ENCODE measurements at regions of chr22 and their contacts with region 1.

Region 1: DNA sequence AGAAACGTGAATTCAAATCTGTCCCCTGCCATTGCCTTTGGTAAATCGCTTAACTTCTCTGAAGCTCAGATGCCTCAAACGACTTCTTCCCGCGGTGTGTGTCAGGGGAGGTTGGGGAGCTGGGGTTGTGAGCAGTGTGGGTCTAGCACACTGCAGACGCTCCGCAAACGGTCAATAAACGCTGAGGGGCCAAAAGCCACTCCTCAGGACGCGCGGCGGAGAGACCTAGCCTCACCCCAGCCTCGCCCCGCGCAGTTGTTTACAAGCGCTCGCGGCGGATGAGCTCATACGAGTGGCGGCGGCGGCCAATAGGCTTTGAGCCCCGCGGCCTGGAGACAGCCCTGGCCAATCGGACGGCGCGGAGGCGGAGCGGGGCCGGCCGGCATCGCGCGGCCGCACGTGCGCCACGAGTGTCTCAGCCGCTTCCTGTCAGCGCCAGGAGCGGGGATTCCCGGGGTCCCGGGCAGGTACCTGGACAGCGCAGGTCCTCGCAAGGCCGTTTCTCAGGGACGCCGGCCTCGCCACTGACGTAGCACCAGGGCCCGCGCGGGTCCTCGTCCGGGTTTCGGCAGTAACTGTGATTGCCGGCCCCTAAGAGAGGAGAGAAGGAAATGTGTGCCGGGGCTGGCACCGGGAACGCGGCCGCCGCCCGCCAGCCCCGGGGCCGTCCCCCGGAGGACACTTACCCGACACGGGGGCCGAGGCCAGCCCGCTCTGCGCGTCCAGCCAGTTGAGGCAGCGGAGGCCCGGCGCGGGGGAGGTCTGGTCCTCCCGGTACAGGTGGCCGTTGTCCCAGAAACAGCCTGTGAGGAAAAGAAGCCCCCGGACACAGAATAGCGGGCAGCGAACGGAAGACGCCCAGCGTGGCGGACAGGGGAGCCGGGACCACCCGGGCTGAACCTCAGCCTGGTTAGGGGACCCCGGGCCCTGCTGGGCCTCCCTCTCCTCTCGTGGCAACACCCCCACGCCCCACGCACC is 1.5 kb downstream of the PIK3IP1 start:
- DNase-seq: peak; percentile 95
- ATAC-seq: peak; percentile 85
- H3K4me3 Mint-ChIP-seq: peak overlapping the region; percentile 93
- H3K27ac Mint-ChIP-seq: peak overlapping the region; percentile 98
- H3K4me1 Mint-ChIP-seq: peaks cover 58% of the 10 kb centered on the region
- H3K27me3 Mint-ChIP-seq: no peaks in the 10 kb centered on the region

Region 2: GRCh38 chr22:31211862-31212730 is 78.7 kb before region 1 on chr22 and contains the start of gene LIMK2:
- POLR2A ChIA-PET with region 1: interaction called, 25 read pairs
- DNase-seq: peak; percentile 100
- ATAC-seq: peak; percentile 97
- H3K4me3 Mint-ChIP-seq: peak within 1 kb of the TSS; percentile 87
- H3K27ac Mint-ChIP-seq: peak within 1 kb of the TSS; percentile 90
- H3K4me1 Mint-ChIP-seq: peaks cover 29% of the 10 kb centered on the region
- H3K27me3 Mint-ChIP-seq: no peaks in the 10 kb centered on the region
- total RNA-seq, gene LIMK2: 38.9 to 39.9 TPM

Region 3: GRCh38 chr22:31241936-31242335 is 48.8 kb before region 1 on chr22:
- POLR2A ChIA-PET with region 1: no interaction called
- DNase-seq: no peak
- ATAC-seq: no peak
- H3K4me3 Mint-ChIP-seq: no peak overlapping the region
- H3K27ac Mint-ChIP-seq: no peak overlapping the region
- H3K4me1 Mint-ChIP-seq: peaks cover 18% of the 10 kb centered on the region
- H3K27me3 Mint-ChIP-seq: no peaks in the 10 kb centered on the region

Region 4: GRCh38 chr22:31278622-31279326 is 12.0 kb before region 1 on chr22:
- POLR2A ChIA-PET with region 1: interaction called, 127 read pairs
- DNase-seq: no peak
- ATAC-seq: peak; percentile 87
- H3K4me3 Mint-ChIP-seq: peak overlapping the region; percentile 52
- H3K27ac Mint-ChIP-seq: peak overlapping the region; percentile 95
- H3K4me1 Mint-ChIP-seq: peaks cover 29% of the 10 kb centered on the region
- H3K27me3 Mint-ChIP-seq: no peaks in the 10 kb centered on the region

Region 5: GRCh38 chr22:31308181-31308580 is 17.4 kb after region 1 on chr22:
- POLR2A ChIA-PET with region 1: interaction called, 22 read pairs
- DNase-seq: no peak
- ATAC-seq: peak; percentile 40
- H3K4me3 Mint-ChIP-seq: peak overlapping the region; percentile 34
- H3K27ac Mint-ChIP-seq: peak overlapping the region; percentile 67
- H3K4me1 Mint-ChIP-seq: peaks cover 20% of the 10 kb centered on the region
- H3K27me3 Mint-ChIP-seq: no peaks in the 10 kb centered on the region

Region 6: DNA sequence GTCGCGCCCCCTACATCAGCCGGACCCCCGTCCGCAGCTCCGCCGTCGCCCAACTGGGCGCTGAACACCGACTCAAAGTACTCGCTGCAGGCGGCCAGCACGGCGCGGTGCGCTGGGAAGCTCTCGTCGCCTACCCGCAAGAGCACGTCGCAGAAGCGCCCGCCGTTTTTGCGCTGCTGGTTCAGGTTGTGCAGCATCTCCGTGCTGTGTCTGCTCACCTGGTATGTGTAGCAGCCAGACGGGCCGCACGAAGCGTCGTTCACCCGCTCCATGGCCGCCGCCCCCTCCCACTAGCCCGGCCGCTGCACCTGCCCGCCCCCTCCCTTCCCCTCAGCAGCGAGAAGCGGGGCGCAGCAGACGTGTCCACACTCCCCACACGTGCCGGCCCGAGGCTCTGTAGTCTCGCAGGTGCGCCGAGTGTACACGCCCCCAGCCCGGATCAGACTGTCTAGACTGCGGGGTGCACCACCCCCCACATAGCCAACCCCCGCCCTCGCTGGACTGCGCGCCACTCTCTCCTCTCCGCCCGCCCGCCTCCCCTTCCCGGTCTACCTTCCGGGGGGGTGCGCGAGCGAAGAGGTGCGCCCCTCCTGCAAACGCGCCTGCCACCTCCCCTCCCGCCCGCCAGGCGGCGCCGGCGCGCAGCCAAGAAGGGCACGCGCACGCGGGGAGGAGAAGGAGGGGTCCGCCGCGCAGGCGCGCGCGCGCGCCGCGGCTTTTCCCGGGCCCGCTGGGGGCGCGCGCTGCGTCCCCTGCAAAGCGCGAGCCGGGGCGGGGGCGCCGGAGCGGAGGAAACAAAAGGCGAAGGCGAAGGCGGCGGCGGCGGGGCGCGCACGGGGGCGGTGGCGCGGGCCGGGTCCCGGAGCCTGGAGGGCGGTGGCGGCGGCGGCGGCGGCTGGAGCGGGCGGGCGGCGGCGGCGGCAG is 54.8 kb after region 1 on chr22:
- POLR2A ChIA-PET with region 1: interaction called, 25 read pairs
- DNase-seq: peak; percentile 95
- ATAC-seq: peak; percentile 54
- H3K4me3 Mint-ChIP-seq: peak overlapping the region; percentile 86
- H3K27ac Mint-ChIP-seq: peak overlapping the region; percentile 88
- H3K4me1 Mint-ChIP-seq: peaks cover 44% of the 10 kb centered on the region
- H3K27me3 Mint-ChIP-seq: no peaks in the 10 kb centered on the region

Measured in activated naive CD8-positive, alpha-beta T cell treated with anti-CD3 and anti-CD28 coated beads, Interleukin-2, amount 10 ng/mL, durations not matched to agents 7 days and 5 days (primary cell).